Tibial artery (tissue), 4 donors: ENCODE measurements at regions of chr1 and their contacts with region 1.

Region 1: DNA sequence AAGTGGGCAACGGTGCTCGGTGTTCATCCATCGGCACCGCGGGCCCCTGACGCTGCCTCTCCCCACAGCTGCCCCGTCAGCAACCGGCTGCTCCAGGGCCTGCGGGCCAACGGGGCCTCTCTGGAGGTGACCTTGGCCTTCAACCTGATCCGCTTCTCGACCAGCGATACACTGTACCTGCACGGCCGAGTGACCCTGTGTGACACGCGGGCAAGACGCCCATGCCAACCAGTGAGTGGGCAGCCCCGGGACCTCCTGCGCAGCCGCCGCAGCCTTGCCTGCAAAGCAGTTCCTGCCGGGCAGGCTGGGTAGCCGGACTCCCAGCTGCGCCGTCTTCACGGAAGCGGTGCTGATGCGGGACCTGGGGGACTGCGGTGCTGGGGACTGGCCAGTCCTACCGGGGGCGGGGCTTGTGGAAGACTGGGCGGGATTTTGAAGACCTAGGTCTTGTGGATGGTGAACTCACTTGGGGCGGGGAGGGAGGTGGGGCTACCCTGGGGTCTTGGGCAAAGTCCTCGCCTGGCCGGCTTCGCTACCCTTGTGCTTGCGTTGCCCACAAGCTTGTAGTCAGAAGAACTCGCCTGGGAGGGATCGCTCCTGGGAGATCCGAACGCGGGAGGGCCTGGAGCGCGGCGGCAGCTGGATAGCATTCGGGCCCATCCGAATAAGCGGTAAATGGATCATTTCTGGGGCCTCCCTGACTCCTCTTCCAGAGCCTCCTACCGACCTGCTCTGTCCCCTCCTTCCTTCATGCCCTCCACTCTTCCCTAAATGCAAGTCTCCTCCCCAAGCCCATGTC is 8.8 kb upstream of the CEP85 start:
- DNase-seq: peak in 1 of 2 donors; percentile 39
- H3K4me3 ChIP-seq: peak overlapping the region; percentile 35 to 42
- H3K27ac ChIP-seq: no peak overlapping the region
- H3K4me1 ChIP-seq: peaks cover 0 to 12% (median 7%) of the 10 kb centered on the region in 4 donors
- H3K27me3 ChIP-seq: peaks cover 0 to 54% of the 10 kb centered on the region in 2 donors
- CTCF ChIP-seq: no peak

Region 2: GRCh38 chr1:26169669-26170471 is 55.4 kb before region 1 on chr1 and contains the start of gene ZNF593:
- intact Hi-C with region 1: loop called (anchors 5 kb)
- DNase-seq: peak; percentile 87 to 93
- H3K4me3 ChIP-seq: peak within 1 kb of the TSS; percentile 80
- H3K27ac ChIP-seq: peak within 1 kb of the TSS; percentile 64 to 79
- H3K4me1 ChIP-seq: peaks cover 0 to 21% (median 14%) of the 10 kb centered on the region in 4 donors
- H3K27me3 ChIP-seq: no peaks in the 10 kb centered on the region
- CTCF ChIP-seq: peak; percentile 89 to 94